PC-9 (cell line): ENCODE measurements at regions of chr17 and their contacts with region 1.

Region 1: DNA sequence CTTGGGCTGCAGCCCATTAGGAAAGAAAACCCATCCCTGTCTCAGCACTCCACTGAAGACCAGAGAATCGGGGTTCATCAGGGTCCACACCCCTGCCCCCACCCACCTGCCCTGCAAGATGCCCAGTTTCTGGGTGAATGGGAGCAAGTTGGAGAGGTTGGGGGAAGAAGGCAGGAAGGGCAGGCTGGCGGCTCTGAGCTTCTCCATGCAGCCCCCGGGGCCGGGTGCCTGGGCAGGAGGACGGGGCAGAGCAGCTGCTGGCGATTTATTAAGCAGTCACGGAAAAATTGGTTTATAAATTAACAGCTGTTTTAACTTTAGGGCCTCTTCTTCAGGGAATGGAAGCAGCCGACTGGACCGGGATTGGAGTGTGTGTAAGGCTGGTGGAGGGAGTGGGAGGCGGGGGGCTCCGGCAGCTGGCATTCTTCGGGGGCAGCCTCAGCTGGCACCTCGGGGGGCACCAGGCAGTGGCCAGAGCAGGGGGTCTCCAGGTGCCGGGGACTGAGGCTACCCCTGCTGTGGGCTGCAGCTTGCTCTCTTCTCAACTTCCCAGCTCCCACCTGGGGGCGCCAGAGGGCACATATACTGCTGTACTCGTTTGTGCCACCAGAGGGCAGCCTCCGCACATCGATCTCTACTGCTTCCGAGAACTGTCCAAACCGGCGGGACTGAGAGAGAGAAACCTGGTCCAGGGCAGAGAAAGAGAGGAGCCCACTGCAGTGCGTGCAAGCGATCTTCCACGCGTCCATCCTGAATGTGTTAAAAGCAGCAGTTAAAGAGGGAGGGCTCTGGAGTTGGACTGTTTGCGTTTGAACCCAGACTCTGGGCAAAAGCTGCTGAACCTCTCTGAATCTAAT is 5.0 kb upstream of the PPP1R1B start:
- DNase-seq: peak; percentile 60 to 89
- H3K4me3 ChIP-seq: no peak overlapping the region
- H3K27ac ChIP-seq: no peak overlapping the region
- H3K4me1 ChIP-seq: 0 out of 2 replicates have a peak, but pooled peaks cover 8% of the 10 kb centered on the region
- H3K27me3 ChIP-seq: peaks cover 5% of the 10 kb centered on the region; the same call in 1 of the 2 replicates
- CTCF ChIP-seq: peak; percentile 100

Region 2: GRCh38 chr17:39209317-39210092 is 412.2 kb before region 1 on chr17:
- CTCF ChIA-PET with region 1: no interaction called
- POLR2A ChIA-PET with region 1: no interaction called
- intact Hi-C with region 1: loop called (anchors 5 kb)
- DNase-seq: no peak
- H3K4me3 ChIP-seq: no peak overlapping the region
- H3K27ac ChIP-seq: no peak overlapping the region
- H3K4me1 ChIP-seq: no peaks in the 10 kb centered on the region
- H3K27me3 ChIP-seq: no peaks in the 10 kb centered on the region
- CTCF ChIP-seq: no peak

Region 3: DNA sequence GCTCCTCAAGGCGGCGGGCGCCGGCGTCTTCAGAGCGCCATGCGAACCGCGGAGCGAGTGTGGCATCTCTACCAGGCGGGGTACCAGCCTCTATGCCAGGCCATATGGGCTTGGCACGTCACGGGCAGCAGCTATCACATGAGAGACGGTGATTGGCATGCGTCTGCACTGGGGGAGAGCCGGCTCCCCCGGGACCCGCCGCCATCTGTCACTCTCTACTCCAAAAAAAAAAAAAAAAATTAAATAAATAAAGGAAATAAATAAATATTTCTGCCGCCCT is 14.0 kb before region 1 on chr17 and contains the start of gene NEUROD2:
- CTCF ChIA-PET with region 1: interaction called, 10 read pairs
- POLR2A ChIA-PET with region 1: no interaction called
- intact Hi-C with region 1: no loop called
- DNase-seq: no peak
- H3K4me3 ChIP-seq: no peak within 1 kb of the TSS
- H3K27ac ChIP-seq: no peak within 1 kb of the TSS
- H3K4me1 ChIP-seq: no peaks in the 10 kb centered on the region
- H3K27me3 ChIP-seq: peaks cover 52% of the 10 kb centered on the region
- CTCF ChIP-seq: no peak
- total RNA-seq, gene NEUROD2: not detected in 2 replicates

Region 4: GRCh38 chr17:39730095-39730921 is 108.6 kb after region 1 on chr17 and contains the start of gene MIEN1:
- CTCF ChIA-PET with region 1: interaction called, 15 read pairs
- POLR2A ChIA-PET with region 1: no interaction called
- intact Hi-C with region 1: no loop called
- DNase-seq: peak; percentile 71 to 95
- H3K4me3 ChIP-seq: peak within 1 kb of the TSS; percentile 76
- H3K27ac ChIP-seq: peak within 1 kb of the TSS; percentile 69
- H3K4me1 ChIP-seq: peaks cover 24% of the 10 kb centered on the region
- H3K27me3 ChIP-seq: no peaks in the 10 kb centered on the region
- CTCF ChIP-seq: peak; percentile 88
- total RNA-seq, gene MIEN1: 49.2 and 50.8 TPM in 2 replicates

Region 5: DNA sequence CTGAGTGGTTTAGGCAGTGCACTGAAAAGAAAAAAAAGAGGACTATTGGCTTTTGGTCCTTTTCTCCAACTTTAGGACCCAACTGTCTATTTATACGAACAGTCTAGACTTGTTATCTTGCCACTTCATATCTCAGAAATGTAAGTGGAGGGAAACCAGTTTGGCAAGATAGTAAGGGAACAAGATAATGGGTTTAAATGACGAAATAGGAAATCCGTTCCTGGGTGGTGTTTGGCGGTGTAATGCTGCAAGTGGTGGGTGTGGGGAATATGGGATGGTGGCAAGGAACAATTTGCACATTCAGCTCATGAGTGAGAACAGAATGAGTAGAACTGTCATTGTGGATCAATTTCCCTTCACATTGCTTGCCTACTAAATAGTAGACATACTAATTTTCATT is 160.7 kb after region 1 on chr17:
- CTCF ChIA-PET with region 1: no interaction called
- POLR2A ChIA-PET with region 1: no interaction called
- intact Hi-C with region 1: no loop called
- DNase-seq: peak; percentile 41 to 94
- H3K4me3 ChIP-seq: peak overlapping the region; percentile 4; the same call in 1 of the 2 replicates
- H3K27ac ChIP-seq: peak overlapping the region; percentile 45
- H3K4me1 ChIP-seq: peaks cover 34% of the 10 kb centered on the region
- H3K27me3 ChIP-seq: no peaks in the 10 kb centered on the region
- CTCF ChIP-seq: no peak

Region 6: GRCh38 chr17:39980351-39981206 is 358.8 kb after region 1 on chr17 and contains the start of gene PSMD3:
- CTCF ChIA-PET with region 1: interaction called, 3 read pairs
- POLR2A ChIA-PET with region 1: no interaction called
- intact Hi-C with region 1: loop called (anchors 1 kb)
- DNase-seq: peak; percentile 97 to 98
- H3K4me3 ChIP-seq: peak within 1 kb of the TSS; percentile 100
- H3K27ac ChIP-seq: peak within 1 kb of the TSS; percentile 57
- H3K4me1 ChIP-seq: peaks cover 15% of the 10 kb centered on the region
- H3K27me3 ChIP-seq: no peaks in the 10 kb centered on the region
- CTCF ChIP-seq: peak; percentile 69
- total RNA-seq, gene PSMD3: 93.2 and 130 TPM in 2 replicates